HCT116 (cell line): ENCODE measurements at regions of chr11 and their contacts with region 1.

Region 1: DNA sequence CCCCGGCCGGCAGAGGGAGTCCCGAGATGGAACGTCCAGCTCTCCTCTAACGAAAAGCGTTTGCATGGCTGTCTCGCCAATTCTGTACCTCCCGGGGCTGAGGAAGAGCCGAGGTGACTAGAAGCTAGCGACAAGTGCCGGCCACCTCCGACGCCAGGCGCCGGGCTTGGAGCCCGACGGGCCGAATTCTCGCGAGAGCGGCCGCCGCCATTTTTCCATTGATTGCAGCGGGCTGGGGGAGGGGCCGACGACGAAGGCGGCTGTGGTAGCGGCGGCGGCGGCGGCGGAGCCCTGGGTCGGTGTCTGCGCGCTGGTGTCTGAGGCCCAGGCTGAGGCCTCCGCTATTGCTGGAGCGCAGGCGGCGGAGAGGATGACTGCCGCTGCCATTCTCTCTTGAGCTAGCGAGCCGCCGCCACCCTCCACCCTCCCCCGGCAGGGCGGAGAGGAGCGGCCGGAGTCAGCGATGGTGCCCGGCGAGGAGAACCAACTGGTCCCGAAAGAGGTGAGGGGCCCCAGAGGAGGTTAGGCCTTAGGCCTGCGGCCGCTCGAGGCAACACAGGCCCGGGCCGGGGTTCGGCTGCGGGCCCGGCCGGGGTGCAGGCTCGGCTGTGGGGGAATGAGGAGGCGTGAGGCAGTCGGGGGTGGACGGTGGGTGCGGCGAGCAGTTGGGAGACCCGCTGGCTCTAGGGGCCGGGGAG is at the start of gene USP47:
- DNase-seq: peak; percentile 76
- ATAC-seq: peak; percentile 83
- H3K4me3 ChIP-seq: peak within 1 kb of the TSS; percentile 81 to 88
- H3K27ac ChIP-seq: peak within 1 kb of the TSS; percentile 97
- H3K4me1 ChIP-seq: peaks cover 32 to 42% of the 10 kb centered on the region in 2 experiments
- H3K27me3 ChIP-seq: no peaks in the 10 kb centered on the region
- CTCF ChIP-seq: peak in 2 of 3 experiments; percentile 48 to 56; a peak in 3 of 6 replicates
- POLR2A ChIP-seq: peak; percentile 92
- RAD21 ChIP-seq: no peak
- total RNA-seq, gene USP47: 18.9 TPM

Region 2: DNA sequence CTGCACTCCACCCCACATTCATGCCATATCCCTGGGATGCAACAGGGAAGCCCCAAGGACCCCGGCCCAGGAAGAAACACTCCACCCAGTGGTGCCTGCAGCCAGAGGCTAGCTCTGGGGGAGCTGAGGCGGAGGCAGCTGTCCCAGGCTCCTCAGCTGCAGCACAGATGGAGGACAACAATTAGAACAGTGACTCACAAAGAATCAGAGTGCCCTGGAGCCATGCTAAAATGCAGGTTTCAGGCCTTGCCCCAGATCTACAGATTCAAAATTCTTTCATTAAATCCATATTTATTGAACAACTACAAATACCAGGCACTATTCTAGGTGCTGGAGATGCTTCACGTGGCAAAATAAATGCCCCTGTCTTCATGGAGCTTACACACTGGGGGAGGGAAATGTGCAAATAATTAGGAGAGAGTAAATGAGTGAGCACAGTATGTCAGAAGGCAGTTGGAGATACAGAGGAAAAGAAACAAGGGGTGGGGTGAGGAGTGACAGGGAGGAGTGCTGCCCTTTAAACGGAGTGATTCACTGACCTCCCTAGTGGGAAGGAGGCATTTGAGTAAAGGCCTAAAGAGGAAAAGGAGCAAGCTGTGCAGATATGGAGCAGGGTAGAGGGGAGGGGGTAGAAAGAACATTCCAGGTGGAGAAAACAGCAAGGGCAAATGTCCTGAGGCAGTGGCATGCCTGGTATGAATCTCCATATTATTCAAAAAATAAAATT is 415.5 kb before region 1 on chr11:
- CTCF ChIA-PET with region 1: no interaction called
- POLR2A ChIA-PET with region 1: no interaction called
- RAD21 ChIA-PET with region 1: no interaction called
- intact Hi-C with region 1: no loop called
- DNase-seq: no peak
- ATAC-seq: no peak
- H3K4me3 ChIP-seq: no peak overlapping the region
- H3K27ac ChIP-seq: no peak overlapping the region
- H3K4me1 ChIP-seq: peaks cover 0 to 8% of the 10 kb centered on the region in 2 experiments; a peak in 1 of 4 replicates
- H3K27me3 ChIP-seq: no peaks in the 10 kb centered on the region
- CTCF ChIP-seq: no peak
- POLR2A ChIP-seq: no peak
- RAD21 ChIP-seq: no peak

Region 3: GRCh38 chr11:11810764-11811726 is 30.8 kb before region 1 on chr11:
- CTCF ChIA-PET with region 1: no interaction called
- POLR2A ChIA-PET with region 1: interaction called, 6 read pairs
- RAD21 ChIA-PET with region 1: no interaction called
- intact Hi-C with region 1: loop called (anchors 2 kb)
- DNase-seq: peak; percentile 85
- ATAC-seq: peak; percentile 97
- H3K4me3 ChIP-seq: peak overlapping the region; percentile 56 to 76
- H3K27ac ChIP-seq: peak overlapping the region; percentile 50
- H3K4me1 ChIP-seq: peaks cover 4 to 22% of the 10 kb centered on the region in 2 experiments; a peak in 3 of 4 replicates
- H3K27me3 ChIP-seq: no peaks in the 10 kb centered on the region
- CTCF ChIP-seq: peak in 1 of 3 experiments; percentile 18; a peak in 1 of 6 replicates
- POLR2A ChIP-seq: peak; percentile 97
- RAD21 ChIP-seq: no peak

Region 4: DNA sequence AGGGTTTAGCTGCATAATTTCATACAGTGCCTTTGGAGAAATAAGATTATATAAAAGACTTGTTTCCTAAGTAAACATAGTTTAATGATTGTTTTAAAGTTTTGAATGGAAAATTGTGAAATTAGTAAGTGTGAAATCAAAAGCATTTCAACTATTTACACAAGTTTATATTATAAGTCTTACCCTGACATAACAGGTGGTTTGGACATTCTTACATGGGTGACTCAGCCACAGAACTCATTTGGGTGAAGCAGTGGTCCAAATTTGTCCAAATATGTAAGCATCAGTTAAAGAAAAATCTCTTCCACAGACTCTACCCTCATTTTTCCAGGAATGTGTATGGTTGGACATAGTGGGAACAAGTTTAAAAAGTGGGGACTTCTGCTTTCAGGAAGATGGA is 67.9 kb after region 1 on chr11:
- CTCF ChIA-PET with region 1: no interaction called
- POLR2A ChIA-PET with region 1: no interaction called
- RAD21 ChIA-PET with region 1: no interaction called
- intact Hi-C with region 1: no loop called
- DNase-seq: no peak
- ATAC-seq: no peak
- H3K4me3 ChIP-seq: no peak overlapping the region
- H3K27ac ChIP-seq: no peak overlapping the region
- H3K4me1 ChIP-seq: no peaks in the 10 kb centered on the region
- H3K27me3 ChIP-seq: no peaks in the 10 kb centered on the region
- CTCF ChIP-seq: no peak
- POLR2A ChIP-seq: no peak
- RAD21 ChIP-seq: no peak

Region 5: DNA sequence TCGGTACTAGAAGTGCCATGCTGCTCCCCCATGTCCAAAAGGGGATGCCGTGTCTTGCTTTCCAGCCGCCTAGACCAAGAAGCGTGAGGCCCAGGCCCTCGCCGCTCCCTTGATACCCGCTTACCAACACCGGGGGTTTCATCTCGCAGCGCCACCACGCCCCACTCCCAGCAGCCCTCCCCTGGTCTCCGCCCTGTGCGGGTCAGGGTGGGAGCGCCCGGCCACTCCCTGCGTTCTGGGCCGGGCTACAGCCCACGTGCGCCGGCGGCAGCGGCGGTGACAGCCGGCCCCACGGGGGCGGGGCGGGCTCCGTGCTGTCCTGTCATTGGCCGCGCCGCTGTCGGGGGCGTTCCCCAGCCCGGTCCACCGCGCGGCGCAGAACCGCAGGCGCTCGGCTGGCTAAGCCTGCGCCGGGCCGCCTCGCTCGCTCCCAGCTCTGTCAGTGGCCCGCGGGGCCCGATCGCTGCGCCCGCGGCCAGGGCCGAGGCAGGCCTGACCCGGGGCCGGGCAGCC is 268.4 kb after region 1 on chr11 and contains the start of gene MICAL2:
- CTCF ChIA-PET with region 1: no interaction called
- POLR2A ChIA-PET with region 1: no interaction called
- RAD21 ChIA-PET with region 1: no interaction called
- intact Hi-C with region 1: no loop called
- DNase-seq: peak; percentile 61
- ATAC-seq: peak; percentile 97
- H3K4me3 ChIP-seq: peak within 1 kb of the TSS; percentile 52 to 75
- H3K27ac ChIP-seq: peak within 1 kb of the TSS; percentile 21; the same call in 1 of the 2 replicates
- H3K4me1 ChIP-seq: peaks cover 12 to 24% of the 10 kb centered on the region in 2 experiments
- H3K27me3 ChIP-seq: no peaks in the 10 kb centered on the region
- CTCF ChIP-seq: no peak
- POLR2A ChIP-seq: no peak
- RAD21 ChIP-seq: no peak
- total RNA-seq, gene MICAL2: 37.4 TPM